PC-3 (cell line): ENCODE measurements at regions of chr9 and their contacts with region 1.

Region 1: DNA sequence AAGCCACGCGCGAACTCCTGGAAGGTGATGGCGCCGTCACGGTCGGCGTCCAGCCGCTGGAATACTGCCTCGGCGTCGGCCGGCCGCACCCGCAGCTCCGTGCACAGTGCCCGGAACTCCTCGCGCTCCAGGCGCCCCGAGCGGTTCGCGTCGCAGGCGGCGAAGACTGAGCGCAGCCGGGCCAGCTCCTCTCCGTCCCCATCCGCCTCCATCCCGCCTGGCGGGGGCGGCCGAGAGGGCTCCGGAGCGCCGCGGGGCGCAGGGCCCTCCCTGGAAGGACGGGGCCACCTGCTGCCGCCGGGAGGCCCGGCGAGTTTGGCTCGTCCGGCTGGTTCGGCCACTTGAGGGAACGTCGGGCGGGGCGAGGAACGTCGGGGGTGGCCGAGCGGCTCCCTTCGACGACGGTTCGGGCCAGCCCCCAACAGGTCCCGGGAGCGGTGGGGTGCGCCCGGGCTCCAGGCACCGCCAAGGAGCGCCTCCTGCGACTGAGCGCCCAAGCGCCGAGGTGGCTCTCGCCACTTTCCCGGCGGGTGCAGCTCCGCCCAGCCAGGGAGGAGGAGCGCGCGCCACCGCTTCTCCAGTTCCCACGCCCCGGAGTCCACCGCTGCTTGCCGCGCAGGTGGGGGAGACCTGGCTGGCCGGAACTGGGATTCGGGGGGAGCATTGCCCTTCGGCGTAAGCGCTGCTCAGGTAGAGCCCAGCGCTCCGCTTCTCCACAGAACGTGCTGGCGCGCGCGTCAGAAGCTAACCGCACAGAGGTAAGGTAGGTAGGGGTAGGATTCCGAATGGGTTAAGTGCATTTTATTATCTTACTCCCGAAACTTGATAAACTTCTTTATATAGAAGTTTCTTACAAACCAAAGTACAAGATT is at the start of gene RASEF:
- DNase-seq: peak; percentile 71
- ATAC-seq: peak; percentile 54
- H3K4me3 ChIP-seq: peak within 1 kb of the TSS; percentile 72
- H3K27ac ChIP-seq: peak within 1 kb of the TSS; percentile 60
- H3K4me1 ChIP-seq: peaks cover 39% of the 10 kb centered on the region
- H3K27me3 ChIP-seq: no peaks in the 10 kb centered on the region
- CTCF ChIP-seq: 0 out of 2 replicates have a peak, but pooled peaks have one; percentile 14
- total RNA-seq, gene RASEF: 12.3 and 14.7 TPM in 2 replicates

Region 2: DNA sequence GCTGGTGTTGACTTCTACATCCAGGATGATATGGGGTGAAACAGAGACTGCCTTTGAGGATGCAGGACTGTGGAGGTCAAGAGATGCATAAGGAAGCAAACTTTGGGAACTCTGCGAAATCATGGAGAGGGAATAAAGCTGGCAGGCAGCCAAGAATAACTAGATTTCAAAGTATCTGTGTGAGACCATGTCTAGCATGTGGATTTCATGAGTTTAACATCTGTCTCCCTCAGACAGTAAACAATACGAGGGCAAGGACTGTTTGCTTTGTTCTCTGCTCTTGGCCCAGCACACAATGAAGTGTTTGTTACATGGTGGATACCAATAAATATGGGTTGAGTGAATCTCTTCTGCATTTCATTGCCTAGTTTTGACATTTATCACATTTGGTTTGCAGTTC is 71.2 kb before region 1 on chr9:
- CTCF ChIA-PET with region 1: no interaction called
- POLR2A ChIA-PET with region 1: no interaction called
- intact Hi-C with region 1: loop called (anchors 10 kb)
- DNase-seq: no peak
- ATAC-seq: no peak
- H3K4me3 ChIP-seq: no peak overlapping the region
- H3K27ac ChIP-seq: no peak overlapping the region
- H3K4me1 ChIP-seq: peaks cover 10% of the 10 kb centered on the region
- H3K27me3 ChIP-seq: no peaks in the 10 kb centered on the region
- CTCF ChIP-seq: no peak

Region 3: GRCh38 chr9:83027153-83027891 is 35.6 kb before region 1 on chr9:
- CTCF ChIA-PET with region 1: interaction called, 3 read pairs
- POLR2A ChIA-PET with region 1: interaction called, 3 read pairs
- intact Hi-C with region 1: loop called (anchors 1 kb)
- DNase-seq: peak; percentile 85
- ATAC-seq: peak; percentile 96
- H3K4me3 ChIP-seq: peak overlapping the region; percentile 33; the same call in 1 of the 2 replicates
- H3K27ac ChIP-seq: peak overlapping the region; percentile 94
- H3K4me1 ChIP-seq: peaks cover 36% of the 10 kb centered on the region
- H3K27me3 ChIP-seq: no peaks in the 10 kb centered on the region
- CTCF ChIP-seq: no peak

Region 4: DNA sequence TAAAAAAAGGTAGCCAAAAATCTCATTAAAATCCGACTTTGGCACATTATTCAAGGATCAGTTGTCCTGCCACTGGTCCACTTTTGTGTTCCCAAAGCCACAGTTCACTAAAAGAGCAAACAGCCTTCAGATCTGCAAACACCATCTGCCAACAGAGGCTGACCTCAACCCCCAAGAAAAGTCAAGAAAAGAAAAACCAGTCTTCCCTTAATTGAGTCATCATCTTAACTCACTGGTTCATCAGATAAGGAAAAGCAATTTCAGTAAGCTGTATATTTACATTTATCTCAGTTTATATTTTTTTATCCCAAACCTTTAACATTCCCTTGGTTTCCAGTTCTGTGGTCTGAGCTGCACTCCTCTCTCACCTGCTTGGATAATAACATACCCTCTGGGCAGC is 21.1 kb before region 1 on chr9:
- CTCF ChIA-PET with region 1: no interaction called
- POLR2A ChIA-PET with region 1: interaction called, 8 read pairs
- intact Hi-C with region 1: loop called (anchors 1 kb)
- DNase-seq: peak; percentile 79
- ATAC-seq: peak; percentile 83
- H3K4me3 ChIP-seq: no peak overlapping the region
- H3K27ac ChIP-seq: peak overlapping the region; percentile 69
- H3K4me1 ChIP-seq: peaks cover 19% of the 10 kb centered on the region
- H3K27me3 ChIP-seq: no peaks in the 10 kb centered on the region
- CTCF ChIP-seq: no peak

Region 5: DNA sequence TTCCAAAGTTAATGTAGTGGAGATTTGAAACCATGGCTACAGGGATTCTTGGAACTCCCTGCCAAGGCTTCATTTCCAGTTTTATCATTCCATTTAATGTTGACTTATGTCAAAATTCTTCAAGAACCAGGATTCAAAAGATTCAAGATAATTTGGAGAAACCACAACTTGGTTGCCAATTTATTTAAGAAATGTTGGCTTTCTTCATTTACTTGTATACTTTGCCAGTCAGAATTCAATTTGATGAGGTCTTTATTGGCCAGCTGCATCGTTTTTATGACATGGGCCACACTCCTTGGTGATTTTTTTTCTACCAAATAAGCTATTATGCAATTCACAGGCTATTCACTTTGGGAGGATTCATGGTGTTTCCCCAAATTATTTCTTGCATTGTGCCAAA is 53.1 kb after region 1 on chr9:
- CTCF ChIA-PET with region 1: no interaction called
- POLR2A ChIA-PET with region 1: no interaction called
- intact Hi-C with region 1: no loop called
- DNase-seq: no peak
- ATAC-seq: no peak
- H3K4me3 ChIP-seq: no peak overlapping the region
- H3K27ac ChIP-seq: no peak overlapping the region
- H3K4me1 ChIP-seq: no peaks in the 10 kb centered on the region
- H3K27me3 ChIP-seq: no peaks in the 10 kb centered on the region
- CTCF ChIP-seq: no peak